OCI-LY7 (cell line): ENCODE measurements at regions of chr17 and their contacts with region 1.

Region 1: DNA sequence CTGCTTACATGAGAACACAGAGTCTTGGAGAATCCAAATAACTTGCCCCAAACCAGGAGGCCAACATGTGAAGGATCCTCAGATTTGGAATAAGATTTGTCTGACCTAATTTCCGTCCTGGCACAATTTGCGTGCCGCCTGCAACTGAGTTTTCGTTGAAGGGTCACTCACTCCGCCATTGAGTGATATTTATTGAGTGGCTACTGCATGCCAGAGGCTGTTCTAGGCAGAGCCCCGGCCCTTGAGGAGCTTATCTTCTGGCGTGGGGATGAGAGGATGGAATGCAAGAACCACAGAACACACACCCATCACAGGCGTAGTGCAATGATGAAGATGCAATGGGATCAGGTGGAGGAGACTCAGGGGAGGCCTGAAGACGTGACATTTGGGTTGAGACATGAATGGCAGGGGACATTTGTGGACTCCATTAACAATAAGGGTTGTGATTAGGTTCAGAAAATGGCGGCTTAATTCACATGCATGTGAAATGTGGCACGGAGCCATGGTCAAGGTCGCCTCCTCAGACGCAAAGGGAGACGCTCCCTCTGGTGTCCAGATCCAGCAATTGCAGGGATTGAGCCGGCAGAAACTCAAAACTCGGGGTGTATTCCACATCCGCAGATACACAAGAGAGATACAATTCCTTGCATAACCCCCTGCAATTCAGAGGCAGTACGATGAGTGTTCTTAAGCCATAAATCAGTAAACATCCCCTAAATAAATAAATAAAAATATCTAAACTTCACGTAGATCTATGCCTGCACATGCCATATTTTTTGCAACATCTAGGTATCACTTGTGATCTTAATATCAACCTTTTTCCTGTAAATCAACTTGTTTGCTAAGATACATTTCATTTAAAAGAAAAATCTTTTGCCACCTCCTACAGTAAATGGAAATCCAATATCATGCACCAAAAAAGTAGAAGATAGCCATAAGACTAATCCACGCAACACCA is 57.9 kb upstream of the CACNG4 start:
- DNase-seq: peak; percentile 69
- H3K4me3 ChIP-seq: no peak overlapping the region
- H3K27ac ChIP-seq: no peak overlapping the region
- H3K4me1 ChIP-seq: no peaks in the 10 kb centered on the region
- CTCF ChIP-seq: peak; percentile 96

Region 2: DNA sequence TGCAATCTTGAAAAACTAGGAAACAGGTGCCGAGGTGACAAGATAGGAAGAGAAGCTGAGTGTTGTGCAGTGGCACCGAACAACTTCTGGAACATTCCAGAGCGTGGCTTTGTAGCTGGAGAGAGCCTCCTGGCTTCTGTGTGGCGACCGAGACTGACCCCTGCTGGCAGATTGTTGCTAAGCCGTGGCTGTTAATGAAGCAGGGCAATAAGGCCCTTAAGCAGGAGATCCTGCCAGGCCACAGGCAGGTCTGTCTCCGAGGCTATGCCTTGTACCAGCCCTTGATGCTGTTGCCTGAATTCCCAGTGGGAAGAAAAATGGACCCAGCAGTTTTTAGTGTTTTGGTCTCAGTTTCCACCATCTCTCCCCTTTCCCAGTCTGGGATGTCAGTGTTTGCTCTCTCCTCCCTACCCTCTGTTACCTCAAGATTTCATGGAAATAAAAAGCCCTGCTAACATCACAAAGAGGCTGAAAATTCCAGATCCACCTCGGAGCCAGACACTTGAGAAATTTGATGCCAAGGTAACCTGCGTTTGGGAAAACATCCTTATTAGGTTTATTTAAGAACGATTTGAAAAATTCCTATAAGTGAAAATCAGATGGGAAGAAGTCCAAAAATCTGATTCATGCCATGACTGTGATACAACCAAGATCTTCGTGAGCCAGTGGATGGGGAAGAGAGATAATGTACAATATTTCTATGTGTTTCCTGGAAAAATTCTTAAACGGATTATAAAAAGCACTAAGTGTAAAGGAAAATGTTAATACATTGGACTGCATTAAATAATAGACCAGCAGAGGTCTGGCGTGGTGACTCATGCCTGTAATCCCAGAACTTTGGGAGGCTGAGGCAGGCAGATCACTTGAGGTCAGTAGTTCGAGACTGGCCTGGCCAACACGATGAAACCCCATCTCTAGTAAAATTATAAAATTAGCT is 339.1 kb before region 1 on chr17:
- CTCF ChIA-PET with region 1: no interaction called
- POLR2A ChIA-PET with region 1: no interaction called
- intact Hi-C with region 1: loop called (anchors 10 kb)
- DNase-seq: peak; percentile 73
- H3K4me3 ChIP-seq: no peak overlapping the region
- H3K27ac ChIP-seq: no peak overlapping the region
- H3K4me1 ChIP-seq: no peaks in the 10 kb centered on the region
- CTCF ChIP-seq: peak; percentile 93

Region 3: DNA sequence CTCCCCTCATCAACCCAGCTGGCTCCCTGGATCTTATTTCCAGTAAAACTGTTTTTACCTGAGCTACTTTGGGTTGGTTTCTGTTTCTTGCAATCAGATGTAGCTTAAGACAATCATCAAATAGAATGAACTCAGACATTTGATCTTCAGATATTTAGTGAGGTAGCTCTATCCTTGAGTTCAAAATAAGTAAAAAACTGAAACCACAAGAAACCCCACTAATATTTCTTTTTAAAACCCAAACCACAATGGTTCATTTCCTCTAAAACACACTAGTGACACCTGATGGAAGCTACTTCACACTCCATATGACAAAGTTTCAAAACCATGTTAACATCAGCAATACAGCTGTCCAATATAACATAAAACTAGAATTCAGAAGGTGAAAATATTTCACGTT is 175.5 kb after region 1 on chr17:
- CTCF ChIA-PET with region 1: no interaction called
- POLR2A ChIA-PET with region 1: no interaction called
- intact Hi-C with region 1: loop called (anchors 5 kb)
- DNase-seq: peak; percentile 62
- H3K4me3 ChIP-seq: peak overlapping the region; percentile 9
- H3K27ac ChIP-seq: peak overlapping the region; percentile 51
- H3K4me1 ChIP-seq: peaks cover 33% of the 10 kb centered on the region
- CTCF ChIP-seq: peak; percentile 72